Dendritic cell treated with granulocyte-macrophage colony-stimulating factor and Interleukin-4, amounts not matched to agents 40 ng/mL and 50 ng/mL, for 4 days (primary cell): ENCODE measurements at regions of chr11 and their contacts with region 1.

Region 1: DNA sequence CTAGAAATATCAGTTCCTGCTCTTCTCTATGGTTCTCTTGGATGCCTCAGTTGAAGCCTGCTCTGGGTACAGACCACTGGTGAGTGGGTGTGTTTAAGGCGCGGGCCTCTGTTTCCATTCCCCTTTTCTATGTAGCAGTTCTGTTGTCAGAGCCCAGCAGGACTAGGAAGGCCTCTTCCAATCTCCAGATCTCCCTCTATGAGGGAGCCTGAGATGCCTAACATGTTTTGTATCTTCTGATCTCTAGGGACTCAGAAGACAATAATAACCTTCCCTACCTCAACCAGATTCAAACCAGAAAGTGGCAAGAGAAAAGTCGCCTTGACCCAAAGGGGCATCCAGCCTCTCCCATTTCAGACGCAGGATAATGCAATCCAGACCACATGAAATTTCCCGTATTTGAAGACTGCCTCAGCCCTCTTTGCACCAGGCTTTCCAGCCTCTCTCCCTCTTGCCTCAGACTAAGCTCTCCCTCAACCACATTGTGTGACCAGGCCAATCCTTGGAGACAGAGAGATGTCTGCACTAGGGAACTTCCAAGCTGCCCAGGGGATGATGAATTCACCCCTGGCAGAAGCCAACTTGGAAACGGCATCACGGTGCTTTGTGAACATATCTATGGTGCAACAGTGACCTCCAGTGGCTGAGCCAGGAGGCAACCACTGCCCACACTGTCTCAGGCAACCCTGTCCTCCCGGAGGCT is 150.1 kb upstream of the UBASH3B start:
- H3K4me3 Mint-ChIP-seq: no peak overlapping the region
- H3K27ac Mint-ChIP-seq: no peak overlapping the region
- H3K4me1 Mint-ChIP-seq: peaks cover 5% of the 10 kb centered on the region
- H3K27me3 Mint-ChIP-seq: peaks cover 4% of the 10 kb centered on the region

Region 2: DNA sequence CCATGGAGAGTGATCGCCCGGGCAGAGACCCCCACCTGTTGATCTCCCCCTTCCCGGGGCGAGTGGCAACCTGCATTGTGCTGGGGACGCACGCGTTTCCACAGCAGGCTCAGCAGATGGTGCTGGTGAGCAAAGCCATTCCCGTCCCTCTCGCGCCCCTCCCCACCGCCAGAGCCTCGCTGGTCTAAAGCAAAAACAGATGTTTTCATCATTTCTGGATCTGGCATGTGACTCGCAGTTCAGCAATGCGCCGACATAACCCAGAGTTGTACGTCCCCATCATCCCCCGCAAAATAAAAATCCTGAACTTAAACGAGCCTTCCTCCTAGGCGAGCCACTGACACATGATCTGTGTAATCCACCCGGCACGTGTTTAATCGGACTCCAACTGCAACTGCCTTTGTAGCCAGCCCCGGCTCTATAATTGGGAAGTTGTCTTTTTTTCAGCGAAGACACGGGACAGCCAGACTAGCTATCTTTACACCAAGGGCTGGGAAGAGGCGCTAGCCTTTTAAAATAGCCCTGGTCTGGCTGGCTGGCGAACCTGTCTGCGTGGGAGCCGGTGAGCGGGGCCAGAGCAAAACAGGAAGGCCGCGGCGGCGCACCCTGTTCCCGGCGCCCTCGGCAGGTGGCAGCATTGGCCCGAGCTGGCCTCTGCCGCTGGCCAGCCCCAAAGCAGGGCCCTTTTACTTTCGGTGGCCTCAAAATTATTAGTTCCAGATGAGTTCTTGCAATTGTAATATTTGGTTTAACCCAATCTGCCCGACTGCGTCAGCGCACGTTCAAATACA is 849.7 kb before region 1 on chr11:
- intact Hi-C with region 1: loop called (anchors 1 kb)
- H3K4me3 Mint-ChIP-seq: peak overlapping the region; percentile 76
- H3K27ac Mint-ChIP-seq: peak overlapping the region; percentile 85
- H3K4me1 Mint-ChIP-seq: peaks cover 14% of the 10 kb centered on the region
- H3K27me3 Mint-ChIP-seq: peaks cover 20% of the 10 kb centered on the region

Region 3: DNA sequence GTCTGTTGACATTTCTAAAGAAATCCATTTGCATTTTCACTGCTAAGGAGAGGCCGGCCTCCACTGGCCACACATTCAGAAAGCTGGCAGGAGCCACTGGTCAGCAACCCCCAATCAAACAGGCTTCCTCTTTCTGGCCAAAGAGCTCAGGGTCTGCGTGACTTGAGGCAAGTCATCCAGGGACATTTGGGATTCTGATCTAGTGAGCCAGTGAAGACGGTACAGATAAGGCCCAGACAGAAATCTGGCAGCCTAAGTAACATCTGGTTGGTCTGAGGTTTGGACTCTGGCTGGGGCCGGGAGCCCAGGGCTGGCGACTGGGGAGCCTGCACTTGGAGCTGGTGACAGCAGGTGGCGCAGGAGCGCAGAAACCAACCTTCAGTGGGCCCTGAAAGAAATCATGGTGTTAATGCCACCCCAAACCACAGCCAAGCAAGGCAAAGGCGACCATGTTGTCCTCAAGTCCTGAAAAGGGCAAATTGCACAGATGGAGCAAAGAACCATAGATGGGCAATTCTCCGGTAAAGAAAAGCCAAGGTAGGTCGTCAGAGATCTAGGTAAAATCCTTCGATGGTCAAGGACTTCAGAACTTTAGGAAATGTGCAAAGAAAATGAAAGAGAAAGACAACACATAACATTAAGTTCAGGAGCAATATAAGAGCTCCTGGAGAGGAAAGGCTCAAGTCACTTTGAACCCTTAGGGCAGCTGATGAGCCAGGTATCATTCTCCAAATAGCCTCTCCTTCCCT is 290.0 kb before region 1 on chr11:
- intact Hi-C with region 1: loop called (anchors 1 kb)
- H3K4me3 Mint-ChIP-seq: no peak overlapping the region
- H3K27ac Mint-ChIP-seq: no peak overlapping the region
- H3K4me1 Mint-ChIP-seq: peaks cover 7% of the 10 kb centered on the region
- H3K27me3 Mint-ChIP-seq: no peaks in the 10 kb centered on the region

Region 4: DNA sequence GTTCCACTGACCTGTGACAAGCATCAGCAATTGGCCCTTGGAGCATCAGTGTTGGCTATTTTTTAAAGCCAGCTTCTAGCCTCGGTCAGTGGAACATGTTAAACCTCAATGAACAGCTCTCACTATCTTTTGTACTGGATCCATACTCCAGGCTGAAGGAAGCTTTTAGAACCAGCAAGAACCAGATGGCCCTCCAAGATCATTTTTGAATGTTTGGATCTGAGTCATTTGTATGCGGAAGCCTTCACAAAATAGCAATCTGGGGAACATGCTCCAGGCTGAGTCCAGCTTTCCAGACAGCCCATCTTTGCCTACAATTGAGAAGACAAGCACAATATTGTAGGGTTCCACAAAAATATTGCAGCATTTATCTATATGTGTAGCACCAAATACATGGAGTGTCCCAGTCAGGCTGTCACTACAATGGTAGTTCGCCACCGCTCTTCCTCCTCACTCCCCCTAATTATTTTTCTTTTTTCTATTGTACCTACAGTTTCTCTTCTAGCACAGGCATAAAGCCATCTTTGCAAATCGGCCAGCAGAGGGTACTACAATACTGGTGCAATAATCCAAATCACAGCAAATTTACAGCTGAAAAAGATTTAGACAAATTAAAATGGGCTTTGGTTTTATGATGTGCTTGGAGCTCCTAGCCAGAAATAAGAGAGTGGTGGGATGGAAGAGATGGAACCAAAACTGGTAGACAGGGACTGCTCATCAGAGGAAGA is 212.0 kb before region 1 on chr11:
- intact Hi-C with region 1: loop called (anchors 5 kb)
- H3K4me3 Mint-ChIP-seq: no peak overlapping the region
- H3K27ac Mint-ChIP-seq: no peak overlapping the region
- H3K4me1 Mint-ChIP-seq: no peaks in the 10 kb centered on the region
- H3K27me3 Mint-ChIP-seq: no peaks in the 10 kb centered on the region